ENCODE measurements at regions of chr5 and their contacts with region 1.

Region 1: GRCh38 chr5:56328753-56329560 is 95.8 kb upstream of the ANKRD55 start:
- DNase-seq: peak; percentile 59
- H3K4me3 Mint-ChIP-seq: peak overlapping the region; percentile 63
- H3K27ac Mint-ChIP-seq: peak overlapping the region; percentile 87
- H3K4me1 Mint-ChIP-seq: peaks cover 74% of the 10 kb centered on the region
- H3K27me3 Mint-ChIP-seq: no peaks in the 10 kb centered on the region

Region 2: DNA sequence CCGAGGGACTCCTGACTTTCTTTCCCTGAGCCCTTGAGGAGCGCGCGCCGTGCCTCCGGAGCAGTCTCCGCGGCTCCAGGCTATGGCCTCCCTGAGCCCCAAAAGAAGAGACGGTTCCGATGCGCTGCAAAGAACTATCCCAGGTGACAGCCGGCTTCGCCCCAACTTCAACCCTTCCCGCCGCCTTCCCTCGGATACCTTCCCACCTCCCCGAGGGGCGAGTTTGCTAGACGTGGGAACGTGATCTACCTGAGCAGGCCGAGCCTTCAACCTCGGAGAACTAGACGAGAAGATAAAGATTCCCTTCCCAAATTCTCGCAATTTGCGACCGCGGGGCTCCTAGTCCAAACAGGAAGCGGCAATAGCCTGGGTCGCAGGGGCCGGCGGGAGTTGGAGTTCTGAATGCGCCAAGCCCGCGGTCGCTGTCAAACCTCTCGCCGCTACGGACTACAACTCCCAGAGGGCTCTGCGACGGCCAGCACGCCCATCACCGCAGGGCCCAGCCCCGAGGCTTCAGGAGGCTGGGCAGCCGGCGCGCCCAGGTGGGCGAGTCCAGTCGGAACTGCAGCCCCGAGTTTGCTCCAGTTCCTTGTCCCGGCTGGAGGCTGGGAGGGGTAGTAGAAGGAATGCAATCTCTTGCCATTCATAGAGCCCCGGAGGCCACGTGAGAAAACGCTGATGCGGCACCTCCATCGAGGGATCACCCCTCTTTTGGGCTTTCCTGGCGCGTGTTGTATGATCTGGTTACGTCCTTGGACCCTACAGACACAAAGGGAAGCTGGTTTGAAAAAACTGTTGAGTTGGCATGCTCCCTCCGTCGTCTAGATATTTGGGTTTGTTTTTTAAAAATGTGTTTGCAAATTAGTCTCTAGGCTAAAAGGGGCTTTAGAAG is 616.7 kb before region 1 on chr5 and contains the start of gene SLC38A9:
- intact Hi-C with region 1: loop called (anchors 1 kb)
- DNase-seq: peak; percentile 89
- H3K4me3 Mint-ChIP-seq: peak within 1 kb of the TSS; percentile 99
- H3K27ac Mint-ChIP-seq: peak within 1 kb of the TSS; percentile 91
- H3K4me1 Mint-ChIP-seq: peaks cover 39% of the 10 kb centered on the region
- H3K27me3 Mint-ChIP-seq: no peaks in the 10 kb centered on the region
- total RNA-seq, gene SLC38A9: 22.9 and 25.7 TPM in 2 replicates

Region 3: GRCh38 chr5:55982957-55983381 is 346.0 kb before region 1 on chr5:
- intact Hi-C with region 1: loop called (anchors 5 kb)
- DNase-seq: no peak
- H3K4me3 Mint-ChIP-seq: peak overlapping the region; percentile 56
- H3K27ac Mint-ChIP-seq: peak overlapping the region; percentile 51
- H3K4me1 Mint-ChIP-seq: peaks cover 81% of the 10 kb centered on the region
- H3K27me3 Mint-ChIP-seq: no peaks in the 10 kb centered on the region

Region 4: DNA sequence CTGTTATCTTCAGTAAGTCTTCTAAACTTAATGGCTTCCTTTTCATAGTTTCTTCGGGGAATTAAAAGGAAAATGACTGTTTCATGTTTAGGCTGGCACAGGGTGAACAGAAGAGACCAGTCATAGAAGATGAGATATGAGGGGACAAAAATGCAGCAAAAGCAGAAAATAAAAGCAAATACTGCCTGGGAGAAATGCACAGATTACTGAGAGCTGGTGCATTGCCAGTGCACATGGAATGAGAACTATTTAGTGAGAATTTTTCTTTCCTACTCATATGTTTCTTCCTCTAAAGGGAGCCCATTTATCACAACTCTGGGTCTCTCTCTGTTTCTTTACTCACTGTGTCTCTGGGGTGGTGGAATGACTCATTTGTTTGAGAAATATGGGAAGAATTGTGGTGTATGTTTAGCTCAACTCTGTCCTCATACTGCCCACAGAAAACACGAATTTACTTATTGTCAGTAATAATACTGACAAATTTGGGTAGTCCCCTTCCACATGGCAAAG is 69.9 kb before region 1 on chr5:
- intact Hi-C with region 1: loop called (anchors 1 kb)
- DNase-seq: no peak
- H3K4me3 Mint-ChIP-seq: no peak overlapping the region
- H3K27ac Mint-ChIP-seq: no peak overlapping the region
- H3K4me1 Mint-ChIP-seq: no peaks in the 10 kb centered on the region
- H3K27me3 Mint-ChIP-seq: peaks cover 14% of the 10 kb centered on the region

Region 5: DNA sequence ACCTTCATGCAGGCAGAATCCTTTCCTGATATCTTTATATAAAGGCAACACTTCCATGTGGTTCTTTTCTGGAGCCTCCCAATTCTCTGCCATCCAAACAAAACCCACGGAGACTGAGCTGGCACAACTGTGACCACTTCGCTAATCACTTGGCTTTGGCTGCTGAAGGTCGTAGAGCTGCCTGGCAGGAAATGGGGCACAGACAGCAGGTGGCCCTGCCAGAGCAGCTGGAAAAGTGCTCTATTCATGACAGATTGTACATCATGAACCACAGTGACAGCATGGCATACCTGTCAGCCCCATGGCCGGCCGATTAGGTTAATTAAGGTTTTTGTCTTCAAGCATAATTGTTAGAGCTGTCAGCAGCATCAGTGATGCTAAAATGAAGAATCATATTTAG is 46.1 kb after region 1 on chr5:
- intact Hi-C with region 1: no loop called
- DNase-seq: no peak
- H3K4me3 Mint-ChIP-seq: no peak overlapping the region
- H3K27ac Mint-ChIP-seq: no peak overlapping the region
- H3K4me1 Mint-ChIP-seq: no peaks in the 10 kb centered on the region
- H3K27me3 Mint-ChIP-seq: no peaks in the 10 kb centered on the region

Region 6: DNA sequence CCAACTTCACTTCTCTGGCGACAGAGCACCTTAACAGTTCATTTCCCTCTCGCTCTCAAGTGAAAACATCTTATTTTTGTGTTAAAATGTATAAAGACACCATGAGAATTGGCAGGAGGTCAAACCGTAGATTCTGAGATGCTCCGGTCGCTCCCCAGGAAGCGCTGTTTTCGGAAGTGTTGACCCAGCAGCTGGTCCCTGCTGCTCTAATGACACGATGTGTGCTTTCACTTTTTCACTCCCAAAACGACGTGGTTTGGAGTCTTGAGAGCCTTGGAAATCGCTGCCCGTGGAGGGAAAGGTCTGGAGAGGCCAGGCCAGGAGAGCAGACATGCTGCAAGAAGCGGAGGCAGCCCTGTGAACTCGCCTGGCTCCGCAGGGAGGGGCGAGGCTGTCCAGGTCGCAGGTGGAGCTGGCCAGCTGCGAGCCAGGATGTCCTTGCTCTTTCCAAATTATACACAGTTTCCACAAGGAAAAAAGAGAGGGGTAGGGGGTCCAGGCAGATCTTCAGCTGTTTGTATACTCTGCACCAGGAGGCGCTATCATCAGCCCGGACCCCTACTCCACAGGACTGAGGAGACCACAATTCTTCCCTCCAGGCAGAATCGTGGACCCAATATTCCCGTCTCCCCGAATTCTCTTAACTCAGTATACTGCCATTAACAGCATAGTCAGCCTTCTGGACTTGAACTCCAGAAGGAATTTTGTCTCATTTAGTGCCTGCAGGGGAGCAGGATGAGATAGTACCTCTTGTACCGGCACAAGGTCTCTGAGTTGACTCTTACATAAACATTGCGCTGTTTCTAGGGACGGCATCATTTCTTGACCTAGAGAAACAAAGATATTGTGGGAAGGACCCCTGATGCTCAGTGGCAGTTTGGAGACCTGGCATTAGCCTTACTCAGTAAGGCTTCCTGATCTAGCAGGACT is 152.7 kb after region 1 on chr5:
- intact Hi-C with region 1: loop called (anchors 1 kb)
- DNase-seq: peak; percentile 5
- H3K4me3 Mint-ChIP-seq: peak overlapping the region; percentile 83
- H3K27ac Mint-ChIP-seq: peak overlapping the region; percentile 77
- H3K4me1 Mint-ChIP-seq: peaks cover 32% of the 10 kb centered on the region
- H3K27me3 Mint-ChIP-seq: no peaks in the 10 kb centered on the region

Region 7: GRCh38 chr5:56814963-56815658 is 486.2 kb after region 1 on chr5 and contains the start of gene MAP3K1:
- intact Hi-C with region 1: loop called (anchors 1 kb)
- DNase-seq: peak; percentile 72
- H3K4me3 Mint-ChIP-seq: peak within 1 kb of the TSS; percentile 91
- H3K27ac Mint-ChIP-seq: peak within 1 kb of the TSS; percentile 82
- H3K4me1 Mint-ChIP-seq: peaks cover 48% of the 10 kb centered on the region
- H3K27me3 Mint-ChIP-seq: peaks cover 2% of the 10 kb centered on the region
- total RNA-seq, gene MAP3K1: 23.6 and 25.3 TPM in 2 replicates

Measured in activated T-helper 1 cell treated with anti-CD3 and anti-CD28 coated beads, Interleukin-12 subunit alpha, Interleukin-12 subunit beta, Interleukin-2, Interleukin-4 antibody, amounts not matched to agents 30 ng/mL and 10 ng/mL and 1 ng/mL, durations not matched to agents 14 hours and 24 hours and 36 hours (primary cell).